HCT116 (cell line): ENCODE measurements at regions of chr20 and their contacts with region 1.

Region 1: DNA sequence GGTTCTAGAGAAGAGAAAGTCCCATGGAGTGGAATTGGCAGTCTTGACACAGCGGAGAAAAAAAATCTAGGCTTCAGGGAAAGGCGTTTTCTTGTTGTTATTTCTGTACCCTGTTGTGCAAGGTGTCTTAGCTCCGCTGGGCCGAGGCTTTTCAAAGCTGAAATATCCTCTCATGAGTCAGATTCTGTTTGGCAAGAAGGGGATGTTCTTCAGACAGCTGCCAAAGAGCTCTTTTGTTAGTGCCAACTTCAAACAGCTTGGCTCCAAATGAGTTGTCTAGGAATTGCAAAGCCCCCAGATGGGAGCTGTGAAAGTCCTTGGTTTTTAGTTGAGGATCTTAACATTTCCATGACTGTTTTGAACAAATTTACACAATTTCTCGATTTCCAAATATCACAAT is 45.6 kb downstream of the LRRN4 start:
- DNase-seq: no peak
- ATAC-seq: no peak
- H3K4me3 ChIP-seq: no peak overlapping the region
- H3K27ac ChIP-seq: no peak overlapping the region
- H3K4me1 ChIP-seq: peaks cover 11 to 18% of the 10 kb centered on the region in 2 experiments
- H3K27me3 ChIP-seq: no peaks in the 10 kb centered on the region
- CTCF ChIP-seq: no peak
- POLR2A ChIP-seq: no peak
- RAD21 ChIP-seq: no peak

Region 2: GRCh38 chr20:5569021-5569420 is 439.2 kb before region 1 on chr20:
- CTCF ChIA-PET with region 1: no interaction called
- POLR2A ChIA-PET with region 1: no interaction called
- RAD21 ChIA-PET with region 1: no interaction called
- intact Hi-C with region 1: loop called (anchors 1 kb)
- DNase-seq: peak; percentile 28
- ATAC-seq: peak; percentile 84
- H3K4me3 ChIP-seq: no peak overlapping the region
- H3K27ac ChIP-seq: no peak overlapping the region
- H3K4me1 ChIP-seq: no peaks in the 10 kb centered on the region
- H3K27me3 ChIP-seq: no peaks in the 10 kb centered on the region
- CTCF ChIP-seq: peak; percentile 31 to 52 (median 40); a peak in 4 of 6 replicates
- POLR2A ChIP-seq: no peak
- RAD21 ChIP-seq: peak; percentile 62

Region 3: DNA sequence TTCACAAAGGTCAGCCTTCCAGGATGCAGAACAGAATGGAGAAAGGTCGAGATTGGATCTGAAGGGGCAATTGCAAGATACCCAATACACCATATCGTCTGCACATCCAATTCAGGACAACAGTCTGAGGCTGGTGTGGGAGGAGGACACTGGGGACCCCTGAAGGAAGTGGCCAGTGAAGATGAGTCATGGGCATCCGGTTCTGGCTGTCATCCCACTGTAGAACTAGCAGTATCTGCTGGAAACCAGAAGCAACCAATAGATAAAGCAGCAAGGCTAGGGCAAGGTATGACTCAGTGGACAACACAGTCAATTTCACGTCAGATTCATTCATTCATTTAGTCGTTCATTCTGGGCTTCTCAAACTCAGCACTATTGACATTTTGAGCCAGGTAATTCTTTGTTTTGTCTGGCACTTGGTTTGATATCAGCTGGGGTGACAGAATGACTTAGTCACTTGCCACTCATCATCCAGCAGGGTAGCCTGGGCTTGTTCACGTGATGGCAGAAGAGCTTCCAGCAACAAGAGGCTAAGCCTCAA is 288.3 kb before region 1 on chr20:
- CTCF ChIA-PET with region 1: no interaction called
- POLR2A ChIA-PET with region 1: no interaction called
- RAD21 ChIA-PET with region 1: no interaction called
- intact Hi-C with region 1: no loop called
- DNase-seq: no peak
- ATAC-seq: no peak
- H3K4me3 ChIP-seq: no peak overlapping the region
- H3K27ac ChIP-seq: no peak overlapping the region
- H3K4me1 ChIP-seq: peaks cover 0 to 8% of the 10 kb centered on the region in 2 experiments; a peak in 1 of 4 replicates
- H3K27me3 ChIP-seq: no peaks in the 10 kb centered on the region
- CTCF ChIP-seq: no peak
- POLR2A ChIP-seq: no peak
- RAD21 ChIP-seq: no peak

Region 4: DNA sequence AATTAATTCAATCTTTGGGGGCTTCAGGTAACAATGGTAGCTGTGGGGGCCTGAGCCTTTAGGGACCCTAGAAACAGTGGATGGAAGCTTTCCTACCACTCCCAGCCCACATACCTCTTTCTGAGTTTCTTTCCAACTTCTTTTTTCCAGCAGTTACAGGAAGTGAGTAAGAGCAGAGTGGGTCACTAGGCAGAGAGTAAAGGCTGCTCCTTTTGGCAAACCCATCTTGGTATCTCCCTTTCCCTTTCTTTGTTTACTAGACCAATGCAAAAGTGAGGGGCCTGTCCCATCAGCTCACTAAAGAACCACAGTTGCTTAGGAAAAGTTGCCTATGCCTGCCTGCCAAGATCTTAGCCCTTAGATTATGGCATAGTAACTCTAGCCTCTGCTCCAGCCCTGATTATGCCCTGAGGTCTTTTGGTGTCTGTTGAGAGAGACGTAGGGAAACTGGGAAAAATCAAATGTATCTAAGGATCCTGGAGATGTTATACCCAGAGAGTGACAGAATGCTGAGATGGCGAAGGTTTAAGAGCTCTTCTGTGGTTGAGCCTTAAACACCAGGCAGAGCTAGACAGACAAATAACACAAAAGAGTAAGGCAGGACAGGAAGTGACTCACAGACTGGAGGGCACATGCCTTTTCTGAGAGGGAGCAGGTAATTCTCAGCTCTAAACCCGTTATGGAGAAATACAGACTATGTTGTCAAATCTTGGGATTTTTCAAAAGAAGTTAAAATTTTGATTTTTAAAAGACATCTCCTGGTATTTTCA is 89.2 kb before region 1 on chr20:
- CTCF ChIA-PET with region 1: no interaction called
- POLR2A ChIA-PET with region 1: no interaction called
- RAD21 ChIA-PET with region 1: no interaction called
- intact Hi-C with region 1: no loop called
- DNase-seq: no peak
- ATAC-seq: peak; percentile 85
- H3K4me3 ChIP-seq: peak overlapping the region in 1 of 2 experiments; percentile 1; a peak in 1 of 4 replicates
- H3K27ac ChIP-seq: 0 out of 2 replicates have a peak overlapping the region, but pooled peaks have one; percentile 31
- H3K4me1 ChIP-seq: peaks cover 11 to 23% of the 10 kb centered on the region in 2 experiments
- H3K27me3 ChIP-seq: peaks cover 9% of the 10 kb centered on the region
- CTCF ChIP-seq: no peak
- POLR2A ChIP-seq: no peak
- RAD21 ChIP-seq: no peak

Region 5: DNA sequence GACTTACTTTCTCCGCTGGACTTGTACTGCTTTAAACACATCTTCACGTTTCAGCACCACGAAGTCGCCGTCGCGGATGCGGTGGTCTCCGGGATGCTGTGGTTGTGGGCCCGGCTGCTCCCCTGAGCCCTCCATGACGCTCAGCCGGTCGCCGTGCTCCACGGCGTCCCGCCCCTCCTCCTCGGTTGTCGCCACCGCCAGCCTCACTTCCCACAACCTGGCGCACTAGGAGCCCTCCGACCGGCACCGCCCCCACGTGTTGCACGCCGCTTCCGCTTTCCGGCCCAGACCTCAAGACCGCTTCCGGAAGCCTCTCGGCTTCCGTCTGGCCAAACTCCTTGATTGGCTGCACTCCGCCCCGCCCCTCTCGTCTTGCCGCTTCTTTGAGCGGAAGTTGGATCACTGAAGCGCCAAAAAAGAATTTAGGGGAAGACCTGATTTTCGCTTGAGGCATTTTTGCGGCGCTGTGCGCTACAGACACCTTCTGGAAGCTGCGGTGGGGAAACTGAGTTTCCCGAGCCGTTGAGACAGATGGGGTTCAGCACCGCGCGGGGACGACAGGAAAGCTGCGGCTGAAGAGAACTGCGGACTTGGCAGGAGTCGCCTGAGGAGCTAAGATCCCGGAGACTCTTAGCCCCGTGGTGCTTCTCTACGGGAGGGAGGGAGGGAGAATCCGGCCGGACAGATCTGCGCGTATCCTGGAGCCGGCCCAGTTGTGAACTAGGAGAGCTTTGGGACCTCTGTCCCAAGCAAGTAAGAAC is 57.8 kb before region 1 on chr20 and contains the starts of genes MCM8 and TRMT6:
- CTCF ChIA-PET with region 1: no interaction called
- POLR2A ChIA-PET with region 1: no interaction called
- RAD21 ChIA-PET with region 1: no interaction called
- intact Hi-C with region 1: no loop called
- DNase-seq: peak; percentile 95
- ATAC-seq: peak; percentile 95
- H3K4me3 ChIP-seq: peak within 1 kb of the TSS; percentile 85 to 86
- H3K27ac ChIP-seq: peak within 1 kb of the TSS; percentile 67
- H3K4me1 ChIP-seq: peaks cover 5 to 23% of the 10 kb centered on the region in 2 experiments
- H3K27me3 ChIP-seq: no peaks in the 10 kb centered on the region
- CTCF ChIP-seq: no peak
- POLR2A ChIP-seq: peak; percentile 50
- RAD21 ChIP-seq: no peak
- total RNA-seq, gene MCM8: 21.9 TPM
- total RNA-seq, gene TRMT6: 13.2 TPM

Region 6: DNA sequence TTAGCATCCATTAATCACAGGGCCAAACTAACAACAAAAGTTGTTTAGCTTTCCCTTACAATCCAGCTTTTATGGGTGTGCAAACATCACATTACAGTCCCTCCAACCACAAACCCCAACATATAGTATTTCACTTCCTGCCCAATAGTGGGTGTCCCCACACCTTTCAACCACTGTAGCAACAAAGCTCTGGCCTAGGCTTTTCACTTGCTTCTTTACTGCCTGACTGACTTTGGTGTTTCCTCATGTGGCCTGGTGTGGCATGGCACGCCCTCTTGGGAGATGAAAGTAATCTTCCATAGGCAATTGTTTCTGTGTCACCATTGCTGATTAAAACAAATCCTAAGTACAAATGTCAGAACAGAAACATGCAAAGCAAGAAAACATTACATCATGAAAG is 11.5 kb before region 1 on chr20:
- CTCF ChIA-PET with region 1: no interaction called
- POLR2A ChIA-PET with region 1: no interaction called
- RAD21 ChIA-PET with region 1: no interaction called
- intact Hi-C with region 1: no loop called
- DNase-seq: no peak
- ATAC-seq: peak; percentile 44; the same call in 1 of the 2 replicates
- H3K4me3 ChIP-seq: no peak overlapping the region
- H3K27ac ChIP-seq: no peak overlapping the region
- H3K4me1 ChIP-seq: no peaks in the 10 kb centered on the region
- H3K27me3 ChIP-seq: no peaks in the 10 kb centered on the region
- CTCF ChIP-seq: no peak
- POLR2A ChIP-seq: no peak
- RAD21 ChIP-seq: no peak

Region 7: DNA sequence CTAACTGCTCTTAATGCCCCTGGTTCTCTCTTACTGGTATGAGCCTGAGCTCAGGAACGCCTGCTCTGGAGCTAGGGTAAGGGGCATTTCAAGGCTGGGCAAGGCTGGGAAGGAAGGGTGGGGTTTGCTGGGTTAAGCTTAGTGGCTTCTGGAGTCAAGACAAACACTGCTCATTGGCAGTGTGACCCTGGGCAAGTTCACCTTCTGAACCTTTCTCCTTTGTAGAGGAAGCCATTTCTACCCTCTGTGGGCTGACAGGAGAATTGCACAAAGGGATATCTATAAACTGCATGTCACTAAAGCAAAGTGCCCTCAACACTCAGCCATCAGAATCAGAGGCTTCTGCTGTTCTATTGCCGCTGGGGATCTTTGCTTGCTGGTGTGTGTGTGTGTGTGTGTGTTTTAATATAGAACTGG is 65.9 kb after region 1 on chr20:
- CTCF ChIA-PET with region 1: no interaction called
- POLR2A ChIA-PET with region 1: no interaction called
- RAD21 ChIA-PET with region 1: no interaction called
- intact Hi-C with region 1: loop called (anchors 2 kb)
- DNase-seq: no peak
- ATAC-seq: peak; percentile 73
- H3K4me3 ChIP-seq: no peak overlapping the region
- H3K27ac ChIP-seq: no peak overlapping the region
- H3K4me1 ChIP-seq: no peaks in the 10 kb centered on the region
- H3K27me3 ChIP-seq: no peaks in the 10 kb centered on the region
- CTCF ChIP-seq: no peak
- POLR2A ChIP-seq: no peak
- RAD21 ChIP-seq: peak; percentile 8; the same call in 1 of the 2 replicates